CD4-positive, alpha-beta memory T cell (primary cell): ENCODE measurements at regions of chr19 and their contacts with region 1.

Region 1: GRCh38 chr19:13181747-13182388 is 31.7 kb downstream of the IER2 start:
- DNase-seq: no peak
- H3K4me3 ChIP-seq: no peak overlapping the region
- H3K4me3 Mint-ChIP-seq: peak overlapping the region in 7 of 8 donors; percentile 13 to 79 (median 63)
- H3K27ac ChIP-seq: no peak overlapping the region
- H3K27ac Mint-ChIP-seq: peak overlapping the region in 6 of 7 donors; percentile 44 to 91 (median 58)
- H3K4me1 ChIP-seq: peaks cover 18% of the 10 kb centered on the region
- H3K4me1 Mint-ChIP-seq: peaks cover 16 to 38% (median 27%) of the 10 kb centered on the region in 4 donors
- H3K27me3 ChIP-seq: no peaks in the 10 kb centered on the region
- H3K27me3 Mint-ChIP-seq: no peaks in the 10 kb centered on the region

Region 2: DNA sequence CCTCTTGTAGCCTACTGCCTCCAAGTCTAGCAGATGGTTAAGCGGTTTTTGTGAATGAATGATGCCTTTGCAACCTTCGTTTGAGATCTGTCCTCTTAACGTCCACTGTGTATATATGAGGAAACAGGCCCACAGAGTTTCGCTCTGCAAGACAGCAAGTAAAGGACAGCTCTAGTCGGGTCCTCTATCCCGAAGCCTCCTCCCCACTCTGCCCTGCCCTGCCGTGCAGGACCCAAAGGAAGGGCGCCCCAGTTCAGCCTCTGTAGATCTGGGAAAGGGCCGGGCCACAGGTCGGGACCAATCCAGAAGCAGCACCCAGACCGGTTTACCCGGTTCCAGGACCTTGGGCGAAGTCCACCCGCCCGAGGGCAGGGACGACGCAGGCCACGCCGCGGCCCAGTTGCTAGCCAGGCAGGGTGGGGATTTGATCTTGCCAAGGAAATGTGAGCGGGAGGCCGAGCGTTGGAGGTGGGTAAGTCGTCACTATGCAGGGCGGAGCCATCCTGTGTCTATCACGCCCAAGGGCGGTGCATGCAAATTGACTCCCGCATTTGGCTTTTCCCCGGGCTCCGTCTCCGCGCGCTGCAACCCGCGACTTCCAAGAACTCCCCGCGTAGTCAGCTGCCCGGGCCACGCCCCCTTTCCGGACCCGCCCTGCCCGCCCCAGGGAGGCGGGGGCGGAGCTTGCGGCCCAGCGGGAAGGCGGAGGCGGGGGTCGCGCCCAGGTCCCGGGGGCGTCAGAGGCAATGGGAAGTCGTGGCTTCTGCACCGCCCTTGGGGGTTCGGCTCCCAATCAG is 19.2 kb before region 1 on chr19:
- CTCF ChIA-PET with region 1: interaction called, 10 read pairs
- POLR2A ChIA-PET with region 1: interaction called, 21 read pairs
- intact Hi-C with region 1: no loop called
- DNase-seq: peak; percentile 69 to 89 (median 72)
- H3K4me3 ChIP-seq: peak overlapping the region; percentile 58 to 91
- H3K4me3 Mint-ChIP-seq: peak overlapping the region; percentile 83 to 91 (median 88)
- H3K27ac ChIP-seq: peak overlapping the region; percentile 82
- H3K27ac Mint-ChIP-seq: peak overlapping the region; percentile 94 to 99 (median 97)
- H3K4me1 ChIP-seq: peaks cover 96% of the 10 kb centered on the region
- H3K4me1 Mint-ChIP-seq: peaks cover 42 to 85% (median 63%) of the 10 kb centered on the region in 4 donors
- H3K27me3 ChIP-seq: no peaks in the 10 kb centered on the region
- H3K27me3 Mint-ChIP-seq: no peaks in the 10 kb centered on the region

Region 3: DNA sequence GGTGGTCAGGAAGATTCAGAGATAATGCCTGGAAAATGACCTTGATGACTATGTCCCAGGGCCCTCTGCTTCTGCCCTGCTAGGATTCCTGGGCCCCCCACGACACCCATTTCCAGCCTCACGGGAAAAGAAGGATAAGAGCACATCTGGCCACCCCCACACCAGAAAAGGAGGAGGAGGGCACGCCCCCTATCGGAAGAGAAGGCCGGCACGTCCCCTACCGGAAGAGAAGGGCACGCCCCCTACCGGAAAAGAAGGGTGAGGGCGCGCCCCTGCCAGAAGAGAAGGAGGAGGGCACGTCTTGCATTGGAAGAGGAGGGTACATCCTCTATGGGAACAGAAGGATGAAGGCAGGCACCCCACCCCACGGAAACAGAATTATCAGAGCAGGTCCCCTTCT is 52.6 kb after region 1 on chr19:
- CTCF ChIA-PET with region 1: no interaction called
- POLR2A ChIA-PET with region 1: no interaction called
- intact Hi-C with region 1: no loop called
- DNase-seq: peak; percentile 41 to 66 (median 56)
- H3K4me3 ChIP-seq: no peak overlapping the region
- H3K4me3 Mint-ChIP-seq: peak overlapping the region; percentile 7 to 82 (median 46)
- H3K27ac ChIP-seq: no peak overlapping the region
- H3K27ac Mint-ChIP-seq: peak overlapping the region in 2 of 7 donors; percentile 60 to 87
- H3K4me1 ChIP-seq: peaks cover 13% of the 10 kb centered on the region
- H3K4me1 Mint-ChIP-seq: peaks cover 7 to 13% (median 13%) of the 10 kb centered on the region in 4 donors
- H3K27me3 ChIP-seq: no peaks in the 10 kb centered on the region
- H3K27me3 Mint-ChIP-seq: peaks cover 2 to 3% of the 10 kb centered on the region in 2 donors

Region 4: GRCh38 chr19:13291759-13292312 is 110.0 kb after region 1 on chr19:
- CTCF ChIA-PET with region 1: no interaction called
- POLR2A ChIA-PET with region 1: no interaction called
- intact Hi-C with region 1: no loop called
- DNase-seq: no peak
- H3K4me3 ChIP-seq: no peak overlapping the region
- H3K4me3 Mint-ChIP-seq: no peak overlapping the region
- H3K27ac ChIP-seq: no peak overlapping the region
- H3K27ac Mint-ChIP-seq: no peak overlapping the region
- H3K4me1 ChIP-seq: no peaks in the 10 kb centered on the region
- H3K4me1 Mint-ChIP-seq: no peaks in the 10 kb centered on the region
- H3K27me3 ChIP-seq: no peaks in the 10 kb centered on the region
- H3K27me3 Mint-ChIP-seq: peaks cover under 1 to 5% of the 10 kb centered on the region in 2 donors

Region 5: DNA sequence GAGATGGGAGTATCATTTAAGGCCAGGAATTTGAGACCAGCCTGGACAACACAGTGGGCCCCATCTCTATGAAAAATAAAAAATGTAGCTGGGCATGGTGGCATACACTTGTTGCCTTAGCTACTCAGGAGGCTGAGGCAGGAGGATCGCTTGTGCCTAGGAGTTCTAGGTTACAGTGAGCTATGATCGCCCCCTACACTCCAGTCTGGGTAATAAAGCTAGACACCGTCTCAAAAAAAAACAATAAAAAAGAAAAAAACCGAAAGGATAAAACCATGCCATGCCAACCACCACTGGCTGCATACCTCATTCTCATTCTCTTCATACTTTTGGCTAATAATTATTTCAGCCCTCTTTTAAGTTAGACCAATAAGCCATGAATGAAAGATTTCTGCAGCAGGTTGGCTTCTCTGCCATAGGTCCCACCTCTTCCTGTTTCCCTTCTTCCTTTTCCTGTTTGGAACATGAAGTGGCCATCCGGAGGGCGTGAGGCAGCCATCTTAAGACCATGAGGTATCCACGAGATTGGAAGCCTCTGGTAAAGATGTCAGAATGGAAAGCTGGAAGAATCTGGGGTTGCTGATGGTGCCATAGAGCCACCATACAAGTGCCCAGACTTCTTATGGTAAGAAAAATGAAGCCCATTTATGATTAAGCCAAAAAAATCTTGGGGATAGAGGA is 153.1 kb after region 1 on chr19:
- CTCF ChIA-PET with region 1: no interaction called
- POLR2A ChIA-PET with region 1: no interaction called
- intact Hi-C with region 1: no loop called
- DNase-seq: no peak
- H3K4me3 ChIP-seq: no peak overlapping the region
- H3K4me3 Mint-ChIP-seq: no peak overlapping the region
- H3K27ac ChIP-seq: no peak overlapping the region
- H3K27ac Mint-ChIP-seq: no peak overlapping the region
- H3K4me1 ChIP-seq: no peaks in the 10 kb centered on the region
- H3K4me1 Mint-ChIP-seq: no peaks in the 10 kb centered on the region
- H3K27me3 ChIP-seq: no peaks in the 10 kb centered on the region
- H3K27me3 Mint-ChIP-seq: peaks cover 22 to 25% of the 10 kb centered on the region in 2 donors